ENCODE measurements at regions of chr15 and their contacts with region 1.

Region 1: GRCh38 chr15:94582369-94582768 is 351.0 kb downstream of the MCTP2 start:
- DNase-seq: peak; percentile 18
- ATAC-seq: peak; percentile 84
- H3K4me3 ChIP-seq: no peak overlapping the region
- H3K27ac ChIP-seq: no peak overlapping the region
- H3K4me1 ChIP-seq: no peaks in the 10 kb centered on the region
- H3K27me3 ChIP-seq: peaks cover 11% of the 10 kb centered on the region
- CTCF ChIP-seq: peak in 2 of 3 experiments; percentile 39 to 53; a peak in 3 of 6 replicates
- POLR2A ChIP-seq: no peak
- RAD21 ChIP-seq: peak; percentile 60

Region 2: DNA sequence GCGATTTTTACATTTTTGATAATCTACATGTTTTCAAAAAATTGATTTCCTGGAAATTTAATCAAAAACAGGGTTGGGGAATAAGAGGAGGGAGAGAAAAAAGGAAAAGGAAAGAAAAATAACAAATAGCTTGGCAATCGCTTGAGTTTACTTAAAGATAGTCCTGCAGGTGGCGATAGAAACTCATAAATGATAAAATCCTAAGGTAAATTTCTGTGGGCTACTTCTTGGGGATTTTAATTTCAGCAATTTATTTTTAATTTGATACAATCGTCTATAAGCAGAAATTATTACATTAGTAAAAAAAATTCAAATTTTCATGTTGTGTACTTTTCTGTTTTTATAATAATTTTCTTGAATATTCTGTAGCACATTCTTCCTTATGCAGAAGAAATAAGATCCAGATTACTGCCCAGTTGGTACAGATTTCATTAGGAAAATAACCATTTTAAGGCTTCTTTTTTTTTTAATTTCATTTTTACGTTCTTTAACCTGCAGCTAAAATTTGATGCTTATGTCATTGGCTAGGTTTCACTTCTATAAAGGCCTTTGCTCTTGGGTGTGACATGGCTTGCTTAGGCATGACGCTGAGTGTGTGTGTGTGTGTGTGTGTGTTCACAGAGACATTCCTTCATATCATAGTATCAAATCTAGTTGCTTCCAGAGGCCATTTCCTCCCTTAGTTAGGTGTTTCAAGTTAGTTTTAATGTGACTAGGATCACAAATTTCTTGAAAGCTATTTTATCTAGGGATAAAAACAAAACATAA is 169.2 kb before region 1 on chr15:
- CTCF ChIA-PET with region 1: interaction called, 7 read pairs
- POLR2A ChIA-PET with region 1: no interaction called
- RAD21 ChIA-PET with region 1: no interaction called
- intact Hi-C with region 1: loop called (anchors 5 kb)
- DNase-seq: peak; percentile 6
- ATAC-seq: no peak
- H3K4me3 ChIP-seq: no peak overlapping the region
- H3K27ac ChIP-seq: no peak overlapping the region
- H3K4me1 ChIP-seq: no peaks in the 10 kb centered on the region
- H3K27me3 ChIP-seq: no peaks in the 10 kb centered on the region
- CTCF ChIP-seq: peak; percentile 16 to 59 (median 42); a peak in 4 of 6 replicates
- POLR2A ChIP-seq: no peak
- RAD21 ChIP-seq: peak; percentile 44; the same call in 1 of the 2 replicates

Region 3: GRCh38 chr15:94596707-94597106 is 14.3 kb after region 1 on chr15:
- CTCF ChIA-PET with region 1: no interaction called
- POLR2A ChIA-PET with region 1: no interaction called
- RAD21 ChIA-PET with region 1: no interaction called
- intact Hi-C with region 1: no loop called
- DNase-seq: no peak
- ATAC-seq: no peak
- H3K4me3 ChIP-seq: no peak overlapping the region
- H3K27ac ChIP-seq: no peak overlapping the region
- H3K4me1 ChIP-seq: no peaks in the 10 kb centered on the region
- H3K27me3 ChIP-seq: peaks cover 10% of the 10 kb centered on the region; the same call in 1 of the 2 replicates
- CTCF ChIP-seq: no peak
- POLR2A ChIP-seq: no peak
- RAD21 ChIP-seq: no peak

Measured in HCT116 (cell line).